SK-N-SH (cell line): ENCODE measurements at regions of chr14 and their contacts with region 1.

Region 1: GRCh38 chr14:21455911-21456667 is at the start of gene CHD8:
- DNase-seq: peak; percentile 95
- H3K4me3 ChIP-seq: peak within 1 kb of the TSS; percentile 85 to 90
- H3K27ac ChIP-seq: peak within 1 kb of the TSS; percentile 91 to 96
- H3K4me1 ChIP-seq: peaks cover 0 to 4% of the 10 kb centered on the region in 2 experiments; a peak in 2 of 4 replicates
- H3K27me3 ChIP-seq: no peaks in the 10 kb centered on the region
- CTCF ChIP-seq: peak; percentile 71
- EP300 ChIP-seq: no peak; a peak in 1 of 4 replicates
- RAD21 ChIP-seq: peak; percentile 57
- polyA plus RNA-seq, gene CHD8: 20.1 and 25.3 TPM in 2 replicates

Region 2: GRCh38 chr14:21437063-21437901 is 18.8 kb before region 1 on chr14:
- CTCF ChIA-PET with region 1: interaction called, 11 read pairs
- POLR2A ChIA-PET with region 1: interaction called, 29 read pairs
- DNase-seq: peak; percentile 93
- H3K4me3 ChIP-seq: peak overlapping the region; percentile 58 to 73
- H3K27ac ChIP-seq: peak overlapping the region; percentile 85 to 90
- H3K4me1 ChIP-seq: peaks cover 6% of the 10 kb centered on the region in 2 experiments; a peak in 3 of 4 replicates
- H3K27me3 ChIP-seq: no peaks in the 10 kb centered on the region
- CTCF ChIP-seq: no peak
- EP300 ChIP-seq: no peak
- RAD21 ChIP-seq: no peak

Region 3: GRCh38 chr14:21467616-21468015 is 11.5 kb after region 1 on chr14:
- CTCF ChIA-PET with region 1: interaction called, 12 read pairs
- POLR2A ChIA-PET with region 1: interaction called, 3 read pairs
- DNase-seq: no peak
- H3K4me3 ChIP-seq: no peak overlapping the region
- H3K27ac ChIP-seq: peak overlapping the region in 1 of 2 experiments; percentile 84; a peak in 2 of 4 replicates
- H3K4me1 ChIP-seq: 0 out of 4 replicates have a peak, but pooled peaks cover 0 to 4% of the 10 kb centered on the region in 2 experiments
- H3K27me3 ChIP-seq: no peaks in the 10 kb centered on the region
- CTCF ChIP-seq: no peak
- EP300 ChIP-seq: no peak
- RAD21 ChIP-seq: no peak

Region 4: DNA sequence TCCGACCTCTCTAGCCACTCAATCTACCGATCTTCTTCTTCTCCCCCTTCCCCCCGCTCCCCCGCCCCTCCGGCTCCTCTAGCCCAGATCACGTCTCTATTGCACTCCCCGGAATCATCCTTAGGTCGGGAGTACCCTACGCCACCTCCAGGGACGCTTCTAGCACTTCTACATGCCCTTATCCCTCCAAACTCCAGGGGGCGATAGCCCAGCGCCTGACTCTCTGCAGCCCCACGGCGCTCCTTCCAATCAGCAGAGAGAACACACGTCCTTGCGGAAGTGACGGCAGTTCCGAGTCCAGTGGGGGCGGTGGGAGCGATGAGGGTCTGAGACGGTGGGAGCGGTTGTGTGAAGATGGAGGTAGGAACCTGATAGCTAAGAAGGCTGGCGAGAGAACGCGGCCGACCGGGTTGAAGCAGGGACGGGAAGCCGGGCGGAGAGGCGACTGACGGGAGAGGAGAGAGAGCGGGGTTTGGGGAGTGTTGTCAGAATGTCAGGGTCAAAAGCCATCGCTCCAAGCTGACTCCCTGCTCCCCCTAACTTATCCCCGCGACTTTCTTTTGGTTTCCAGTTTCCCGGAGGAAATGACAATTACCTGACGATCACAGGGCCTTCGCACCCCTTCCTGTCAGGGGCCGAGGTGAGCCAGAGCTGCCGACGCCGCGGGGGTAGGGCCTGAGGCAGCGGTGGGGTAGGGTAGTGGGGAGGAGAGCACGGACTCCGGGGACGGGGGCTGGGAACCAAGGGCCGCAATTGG is 21.0 kb after region 1 on chr14 and contains the starts of genes RAB2B and TOX4:
- CTCF ChIA-PET with region 1: interaction called, 38 read pairs
- POLR2A ChIA-PET with region 1: interaction called, 11 read pairs
- DNase-seq: peak; percentile 93
- H3K4me3 ChIP-seq: peak within 1 kb of the TSS; percentile 85 to 99
- H3K27ac ChIP-seq: peak within 1 kb of the TSS; percentile 78 to 86
- H3K4me1 ChIP-seq: peaks cover 4 to 6% of the 10 kb centered on the region in 2 experiments; a peak in 2 of 4 replicates
- H3K27me3 ChIP-seq: no peaks in the 10 kb centered on the region
- CTCF ChIP-seq: peak; percentile 91
- EP300 ChIP-seq: no peak
- RAD21 ChIP-seq: no peak
- polyA plus RNA-seq, gene RAB2B: 24.4 and 41.2 TPM in 2 replicates
- polyA plus RNA-seq, gene TOX4: 52.3 and 69.3 TPM in 2 replicates